ENCODE measurements at regions of chr4 and their contacts with region 1.

Region 1: DNA sequence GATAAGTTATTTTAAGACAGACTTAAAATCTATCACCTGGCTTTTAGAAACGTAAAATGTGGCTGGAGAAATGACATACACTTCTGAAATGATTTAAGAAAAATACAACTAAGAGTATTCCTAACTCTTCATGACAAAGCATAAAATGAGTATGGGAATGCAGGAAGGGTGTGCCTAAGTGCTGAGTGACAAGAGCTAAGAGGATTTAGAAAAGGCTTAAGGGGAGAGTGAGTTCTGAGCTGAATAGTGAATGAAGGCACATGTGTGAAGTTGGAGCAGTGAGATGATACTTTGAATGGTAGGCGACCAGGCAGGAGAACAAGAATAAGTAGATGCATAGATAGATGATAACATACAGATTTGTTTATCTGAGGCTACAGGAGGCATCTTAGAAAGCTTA is 458.3 kb upstream of the TENM3 start:
- DNase-seq: no peak
- H3K4me3 ChIP-seq: no peak overlapping the region
- H3K27ac ChIP-seq: no peak overlapping the region
- H3K4me1 ChIP-seq: no peaks in the 10 kb centered on the region
- H3K27me3 ChIP-seq: no peaks in the 10 kb centered on the region
- CTCF ChIP-seq: no peak
- EP300 ChIP-seq: no peak
- POLR2A ChIP-seq: no peak

Region 2: DNA sequence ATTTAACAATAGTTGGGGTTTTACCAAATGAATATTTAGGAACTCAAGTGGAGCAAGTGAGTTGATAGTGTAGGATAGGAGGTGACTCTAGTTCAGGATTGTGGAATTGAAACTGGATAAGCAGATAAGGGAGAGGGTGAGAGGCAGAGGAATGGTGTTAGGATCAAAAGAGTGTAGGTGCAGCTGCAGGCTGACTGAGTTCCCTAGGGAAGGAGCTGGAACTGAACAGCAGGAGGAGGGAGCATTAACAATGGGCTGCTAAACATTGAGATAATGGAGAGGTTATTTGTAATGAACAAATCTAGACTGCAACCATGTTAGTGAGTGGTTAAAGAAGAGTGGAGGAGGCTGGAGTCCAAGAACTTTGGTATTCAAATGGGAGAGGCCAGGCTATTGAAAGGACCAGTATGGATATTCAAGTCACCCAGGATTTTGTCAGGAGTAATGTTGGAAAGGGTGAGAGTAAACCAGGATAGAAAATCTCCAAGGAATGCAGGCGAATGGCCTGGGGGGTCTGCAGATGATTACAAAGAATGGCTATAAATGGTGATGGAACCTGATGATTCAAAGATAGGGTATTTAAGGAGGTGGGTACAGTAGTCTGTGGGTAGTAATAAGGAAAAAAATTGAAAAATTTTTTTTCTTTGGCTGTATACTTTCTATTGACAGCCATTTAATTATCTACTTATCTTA is 38.8 kb before region 1 on chr4:
- in situ Hi-C with region 1: no loop called
- intact Hi-C with region 1: no loop called
- DNase-seq: no peak
- H3K4me3 ChIP-seq: no peak overlapping the region
- H3K27ac ChIP-seq: no peak overlapping the region
- H3K4me1 ChIP-seq: no peaks in the 10 kb centered on the region
- H3K27me3 ChIP-seq: no peaks in the 10 kb centered on the region
- CTCF ChIP-seq: no peak
- EP300 ChIP-seq: no peak
- POLR2A ChIP-seq: no peak

Region 3: GRCh38 chr4:182141051-182141450 is 356.2 kb after region 1 on chr4:
- in situ Hi-C with region 1: no loop called
- intact Hi-C with region 1: no loop called
- DNase-seq: no peak
- H3K4me3 ChIP-seq: no peak overlapping the region
- H3K27ac ChIP-seq: no peak overlapping the region
- H3K4me1 ChIP-seq: peaks cover 11 to 36% (median 25%) of the 10 kb centered on the region in 4 donors
- H3K27me3 ChIP-seq: peaks cover 93% of the 10 kb centered on the region
- CTCF ChIP-seq: no peak
- EP300 ChIP-seq: no peak
- POLR2A ChIP-seq: no peak

Region 4: GRCh38 chr4:182169987-182170386 is 385.1 kb after region 1 on chr4:
- in situ Hi-C with region 1: no loop called
- intact Hi-C with region 1: no loop called
- DNase-seq: no peak
- H3K4me3 ChIP-seq: no peak overlapping the region
- H3K27ac ChIP-seq: no peak overlapping the region
- H3K4me1 ChIP-seq: no peaks in the 10 kb centered on the region
- H3K27me3 ChIP-seq: no peaks in the 10 kb centered on the region
- CTCF ChIP-seq: no peak
- EP300 ChIP-seq: no peak
- POLR2A ChIP-seq: no peak

Region 5: GRCh38 chr4:183621875-183622274 is 1837.0 kb after region 1 on chr4:
- in situ Hi-C with region 1: no loop called
- intact Hi-C with region 1: loop called (anchors 5 kb)
- DNase-seq: no peak
- H3K4me3 ChIP-seq: no peak overlapping the region
- H3K27ac ChIP-seq: no peak overlapping the region
- H3K4me1 ChIP-seq: no peaks in the 10 kb centered on the region
- H3K27me3 ChIP-seq: no peaks in the 10 kb centered on the region
- CTCF ChIP-seq: no peak
- EP300 ChIP-seq: no peak
- POLR2A ChIP-seq: no peak

Measured in transverse colon (tissue), 4 donors.